ENCODE measurements at regions of chr3 and their contacts with region 1.

Region 1: DNA sequence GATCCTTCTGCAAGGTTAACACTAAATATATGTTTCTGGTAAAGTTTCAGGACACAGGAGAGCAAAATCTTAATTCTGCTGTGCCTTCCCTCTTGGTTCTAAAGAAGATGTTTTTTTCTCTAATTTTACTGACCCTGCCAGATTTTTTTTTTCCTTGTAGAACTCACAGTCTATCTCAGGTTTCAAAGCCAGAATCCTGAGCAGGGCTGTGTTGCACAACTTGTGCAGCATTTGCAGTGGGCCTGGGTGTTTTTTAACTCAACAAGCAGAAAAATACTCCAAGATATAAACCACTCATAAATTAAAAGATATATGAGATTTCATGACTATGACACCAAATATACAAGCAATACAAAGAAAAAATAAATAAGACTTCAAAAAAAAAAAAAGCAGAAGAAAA is 40.2 kb upstream of the ARF4 start:
- DNase-seq: no peak
- H3K4me3 Mint-ChIP-seq: no peak overlapping the region
- H3K27ac Mint-ChIP-seq: no peak overlapping the region
- H3K4me1 Mint-ChIP-seq: no peaks in the 10 kb centered on the region
- H3K27me3 Mint-ChIP-seq: no peaks in the 10 kb centered on the region
- CTCF ChIP-seq: no peak

Region 2: GRCh38 chr3:57659806-57660439 is 22.5 kb after region 1 on chr3:
- CTCF ChIA-PET with region 1: no interaction called
- intact Hi-C with region 1: no loop called
- DNase-seq: no peak
- H3K4me3 Mint-ChIP-seq: no peak overlapping the region
- H3K27ac Mint-ChIP-seq: no peak overlapping the region
- H3K4me1 Mint-ChIP-seq: no peaks in the 10 kb centered on the region
- H3K27me3 Mint-ChIP-seq: no peaks in the 10 kb centered on the region
- CTCF ChIP-seq: no peak

Region 3: GRCh38 chr3:57852896-57853295 is 215.5 kb after region 1 on chr3:
- CTCF ChIA-PET with region 1: no interaction called
- intact Hi-C with region 1: loop called (anchors 10 kb)
- DNase-seq: no peak
- H3K4me3 Mint-ChIP-seq: no peak overlapping the region
- H3K27ac Mint-ChIP-seq: no peak overlapping the region
- H3K4me1 Mint-ChIP-seq: no peaks in the 10 kb centered on the region
- H3K27me3 Mint-ChIP-seq: no peaks in the 10 kb centered on the region
- CTCF ChIP-seq: no peak